CD14-positive monocyte (primary cell): ENCODE measurements at regions of chr16 and their contacts with region 1.

Region 1: DNA sequence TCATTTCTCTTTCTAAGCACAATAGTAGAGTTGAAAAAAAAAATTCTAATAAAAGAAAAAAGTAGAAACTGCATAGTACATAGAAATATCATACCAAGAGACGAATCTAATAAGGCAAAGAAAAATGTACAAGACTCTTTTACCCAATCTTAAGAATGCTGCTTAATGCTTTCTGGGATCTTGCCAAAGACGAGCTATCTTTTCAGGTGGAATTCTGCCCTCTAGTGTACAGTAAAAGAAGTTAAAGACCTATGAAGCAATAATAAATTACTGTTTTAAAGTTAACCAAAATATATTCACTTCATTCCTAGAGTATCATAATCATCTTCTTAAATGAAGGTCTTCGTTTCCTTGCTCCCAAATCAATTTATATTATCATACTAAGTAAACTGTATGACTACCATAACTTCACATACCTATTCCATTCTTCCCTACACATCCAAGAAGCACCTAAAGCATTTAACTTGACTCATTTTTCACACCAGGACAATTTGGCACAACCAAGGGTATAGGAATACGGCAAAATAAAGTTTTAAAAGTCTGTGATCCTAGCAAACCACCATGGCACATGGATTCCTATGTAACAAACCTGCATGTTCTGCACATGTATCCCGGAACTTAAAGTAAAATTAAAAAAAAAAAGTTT is 47.7 kb downstream of the CFDP1 start:
- DNase-seq: peak; percentile 52 to 69 (median 68)
- H3K4me3 ChIP-seq: no peak overlapping the region
- H3K4me3 Mint-ChIP-seq: peak overlapping the region in 1 of 2 donors; percentile 63
- H3K27ac ChIP-seq: no peak overlapping the region
- H3K27ac Mint-ChIP-seq: no peak overlapping the region
- H3K4me1 ChIP-seq: peaks cover 6 to 8% of the 10 kb centered on the region in 2 donors
- H3K4me1 Mint-ChIP-seq: peaks cover 9% of the 10 kb centered on the region
- H3K27me3 ChIP-seq: peaks cover 65 to 88% of the 10 kb centered on the region in 2 donors
- H3K27me3 Mint-ChIP-seq: peaks cover 59 to 88% (median 72%) of the 10 kb centered on the region in 3 donors
- CTCF ChIP-seq: peak; percentile 84

Region 2: GRCh38 chr16:75198135-75198600 is 187.5 kb before region 1 on chr16:
- intact Hi-C with region 1: loop called in 1 of 2 experiments (anchors 2 kb)
- DNase-seq: no peak
- H3K4me3 ChIP-seq: no peak overlapping the region
- H3K4me3 Mint-ChIP-seq: peak overlapping the region in 1 of 2 donors; percentile 63
- H3K27ac ChIP-seq: no peak overlapping the region
- H3K27ac Mint-ChIP-seq: no peak overlapping the region
- H3K4me1 ChIP-seq: no peaks in the 10 kb centered on the region
- H3K4me1 Mint-ChIP-seq: peaks cover 4% of the 10 kb centered on the region
- H3K27me3 ChIP-seq: peaks cover 14 to 51% of the 10 kb centered on the region in 2 donors
- H3K27me3 Mint-ChIP-seq: peaks cover 72 to 92% (median 75%) of the 10 kb centered on the region in 3 donors
- CTCF ChIP-seq: no peak

Region 3: GRCh38 chr16:75238132-75238852 is 147.3 kb before region 1 on chr16:
- intact Hi-C with region 1: loop called in 1 of 2 experiments (anchors 5 kb)
- DNase-seq: no peak
- H3K4me3 ChIP-seq: no peak overlapping the region
- H3K4me3 Mint-ChIP-seq: no peak overlapping the region
- H3K27ac ChIP-seq: no peak overlapping the region
- H3K27ac Mint-ChIP-seq: no peak overlapping the region
- H3K4me1 ChIP-seq: no peaks in the 10 kb centered on the region
- H3K4me1 Mint-ChIP-seq: no peaks in the 10 kb centered on the region
- H3K27me3 ChIP-seq: peaks cover 2 to 84% of the 10 kb centered on the region in 2 donors
- H3K27me3 Mint-ChIP-seq: peaks cover 54 to 99% (median 73%) of the 10 kb centered on the region in 3 donors
- CTCF ChIP-seq: no peak